Calu3 (cell line): ENCODE measurements at regions of chr1 and their contacts with region 1.

Region 1: DNA sequence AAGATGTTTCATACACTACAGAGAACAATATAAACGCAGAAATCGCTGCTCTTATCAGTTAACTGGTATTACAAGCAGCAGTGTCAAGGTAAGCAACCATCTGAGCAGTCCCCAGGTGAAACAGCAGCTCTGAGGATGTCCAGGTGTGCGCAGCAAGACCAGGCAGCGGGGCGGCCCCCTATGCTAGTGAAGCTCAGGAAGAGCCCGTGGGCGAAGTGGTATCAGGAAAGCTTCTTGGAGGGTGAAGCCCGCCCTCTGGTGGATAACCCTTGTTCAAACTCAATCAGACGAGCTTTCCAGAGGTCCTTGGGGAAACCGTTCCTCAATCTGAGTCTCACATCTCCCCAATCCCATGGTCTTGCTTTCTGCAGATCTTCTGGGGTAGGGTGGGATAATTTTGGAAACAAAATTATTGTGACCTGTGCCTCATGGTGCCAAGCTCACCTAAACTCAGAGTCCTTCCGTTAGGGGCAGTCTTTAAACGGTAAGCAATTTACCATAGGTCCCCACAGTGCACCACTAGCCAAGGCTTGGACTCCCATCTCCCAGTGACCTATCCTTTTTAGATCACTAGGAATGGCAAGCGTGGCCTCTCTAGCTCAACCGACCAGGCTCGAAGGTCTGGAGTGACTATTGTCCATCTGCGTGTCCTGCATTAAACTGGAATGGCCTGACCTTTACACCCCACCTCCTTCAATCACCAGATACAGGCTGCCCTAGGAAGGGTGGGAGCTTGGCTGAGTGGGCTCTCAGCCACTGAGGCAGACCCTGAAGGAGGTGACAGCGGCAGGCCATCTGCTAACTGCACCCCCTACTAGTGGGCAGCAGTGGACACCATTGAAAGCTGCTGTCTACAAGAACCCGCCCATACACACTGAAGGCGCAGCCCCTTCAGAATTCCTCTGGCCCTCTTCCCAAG is 13.6 kb upstream of the FAM110D start:
- DNase-seq: peak; percentile 78
- H3K4me3 Mint-ChIP-seq: no peak overlapping the region
- H3K27ac Mint-ChIP-seq: no peak overlapping the region
- H3K4me1 Mint-ChIP-seq: no peaks in the 10 kb centered on the region
- H3K27me3 Mint-ChIP-seq: peaks cover 29% of the 10 kb centered on the region
- CTCF ChIP-seq: peak; percentile 63

Region 2: DNA sequence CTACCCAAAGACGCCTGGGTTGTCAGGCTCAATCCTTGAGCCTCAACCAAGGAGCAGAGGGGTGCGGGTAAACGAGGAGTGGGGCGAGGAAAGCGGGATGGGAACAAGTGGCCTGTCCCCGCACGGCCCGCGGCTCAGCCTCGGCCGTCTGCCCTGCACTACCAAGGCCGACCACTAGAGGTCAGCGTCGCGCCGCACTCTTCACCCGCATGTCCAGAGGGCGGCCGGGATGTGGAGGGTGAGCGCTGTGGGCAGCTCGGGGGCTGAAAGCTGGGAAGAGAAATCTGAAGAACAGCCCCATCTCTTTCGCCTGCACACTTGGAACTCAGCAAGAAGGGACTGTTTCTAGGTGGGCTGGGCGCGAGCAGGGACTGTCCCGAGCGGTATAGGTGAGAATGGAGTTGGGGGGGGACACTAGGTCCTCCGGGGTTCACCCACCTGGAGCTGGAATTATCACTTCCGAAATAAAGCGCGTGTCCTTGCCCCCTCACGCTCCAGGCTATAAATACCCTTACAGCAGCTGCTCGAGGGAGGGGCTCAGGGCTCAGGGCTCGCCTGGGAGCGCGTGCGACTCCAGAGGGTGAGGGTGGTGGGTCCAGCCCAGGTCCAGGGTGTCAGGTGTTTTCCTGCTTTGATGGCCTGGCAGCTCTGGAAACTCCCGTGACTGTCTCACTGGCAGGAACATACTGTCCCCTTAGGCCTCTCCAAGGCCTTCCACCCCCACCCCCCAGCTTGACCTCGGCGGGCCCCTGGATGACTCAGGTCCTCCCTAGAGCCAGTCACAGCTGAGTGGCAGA is 109.1 kb before region 1 on chr1:
- CTCF ChIA-PET with region 1: interaction called, 22 read pairs
- intact Hi-C with region 1: loop called (anchors 2 kb)
- DNase-seq: peak; percentile 83
- H3K4me3 Mint-ChIP-seq: peak overlapping the region; percentile 96
- H3K27ac Mint-ChIP-seq: peak overlapping the region; percentile 52
- H3K4me1 Mint-ChIP-seq: peaks cover 12% of the 10 kb centered on the region
- H3K27me3 Mint-ChIP-seq: peaks cover 19% of the 10 kb centered on the region
- CTCF ChIP-seq: peak; percentile 97

Region 3: GRCh38 chr1:26102526-26102925 is 42.8 kb before region 1 on chr1:
- CTCF ChIA-PET with region 1: interaction called, 22 read pairs
- intact Hi-C with region 1: loop called (anchors 1 kb)
- DNase-seq: no peak
- H3K4me3 Mint-ChIP-seq: no peak overlapping the region
- H3K27ac Mint-ChIP-seq: no peak overlapping the region
- H3K4me1 Mint-ChIP-seq: peaks cover 9% of the 10 kb centered on the region
- H3K27me3 Mint-ChIP-seq: no peaks in the 10 kb centered on the region
- CTCF ChIP-seq: no peak

Region 4: GRCh38 chr1:26126321-26127084 is 18.8 kb before region 1 on chr1:
- CTCF ChIA-PET with region 1: interaction called, 16 read pairs
- intact Hi-C with region 1: no loop called
- DNase-seq: peak; percentile 66
- H3K4me3 Mint-ChIP-seq: peak overlapping the region; percentile 50
- H3K27ac Mint-ChIP-seq: peak overlapping the region; percentile 96
- H3K4me1 Mint-ChIP-seq: peaks cover 36% of the 10 kb centered on the region
- H3K27me3 Mint-ChIP-seq: no peaks in the 10 kb centered on the region
- CTCF ChIP-seq: no peak

Region 5: GRCh38 chr1:26200413-26200812 is 55.1 kb after region 1 on chr1:
- CTCF ChIA-PET with region 1: no interaction called
- intact Hi-C with region 1: no loop called
- DNase-seq: no peak
- H3K4me3 Mint-ChIP-seq: no peak overlapping the region
- H3K27ac Mint-ChIP-seq: no peak overlapping the region
- H3K4me1 Mint-ChIP-seq: no peaks in the 10 kb centered on the region
- H3K27me3 Mint-ChIP-seq: peaks cover 90% of the 10 kb centered on the region
- CTCF ChIP-seq: no peak